ENCODE measurements at regions of chr2 and their contacts with region 1.

Region 1: DNA sequence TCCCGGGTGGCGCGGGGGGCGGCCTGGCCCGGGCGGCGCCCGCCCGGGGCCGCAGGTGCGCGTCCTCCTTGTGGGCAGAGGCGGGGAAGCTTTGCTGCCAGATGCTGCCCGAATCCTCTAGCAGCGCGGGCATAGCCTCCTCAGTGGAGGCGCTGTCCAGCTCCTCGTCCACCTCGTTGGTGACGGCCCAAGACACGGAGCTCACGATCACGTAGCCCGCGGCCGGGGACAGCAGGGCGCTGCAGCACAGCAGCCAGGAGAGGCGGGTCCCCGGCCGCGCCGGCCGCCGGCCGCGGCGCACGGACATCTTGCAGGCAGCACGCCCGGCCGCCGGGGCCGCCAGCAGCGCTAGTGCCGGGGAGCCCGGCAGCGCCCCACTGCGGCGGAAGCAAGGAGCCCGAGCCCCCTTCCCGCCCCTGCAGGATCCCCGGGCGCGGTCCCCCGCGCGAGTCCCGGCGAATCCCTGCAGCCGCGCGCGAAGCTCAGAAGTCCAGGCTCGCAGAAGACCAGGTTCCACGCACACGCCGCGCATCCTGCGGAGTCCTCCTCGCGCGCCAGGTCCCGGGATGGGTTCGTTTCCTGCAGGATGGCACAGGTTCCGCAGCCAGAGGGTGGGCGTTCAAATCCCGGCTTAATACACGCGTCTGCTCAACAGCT is at the start of gene CREG2:
- DNase-seq: peak; percentile 34 to 89
- H3K4me3 ChIP-seq: peak within 1 kb of the TSS; percentile 62 to 79 (median 74)
- H3K27ac ChIP-seq: no peak within 1 kb of the TSS
- H3K4me1 ChIP-seq: peaks cover 0 to 6% (median 3%) of the 10 kb centered on the region in 4 experiments; a peak in 2 of 7 replicates
- H3K27me3 ChIP-seq: peaks cover 16 to 35% (median 27%) of the 10 kb centered on the region in 4 experiments
- CTCF ChIP-seq: peak; percentile 68 to 98 (median 70)
- EP300 ChIP-seq: 0 out of 3 replicates have a peak, but pooled peaks of 1 of the 2 experiments have one; percentile 30
- POLR2A ChIP-seq: no peak
- RAD21 ChIP-seq: peak; percentile 40 to 72
- total RNA-seq, gene CREG2: 2.0 and 2.2 TPM in 2 replicates

Region 2: DNA sequence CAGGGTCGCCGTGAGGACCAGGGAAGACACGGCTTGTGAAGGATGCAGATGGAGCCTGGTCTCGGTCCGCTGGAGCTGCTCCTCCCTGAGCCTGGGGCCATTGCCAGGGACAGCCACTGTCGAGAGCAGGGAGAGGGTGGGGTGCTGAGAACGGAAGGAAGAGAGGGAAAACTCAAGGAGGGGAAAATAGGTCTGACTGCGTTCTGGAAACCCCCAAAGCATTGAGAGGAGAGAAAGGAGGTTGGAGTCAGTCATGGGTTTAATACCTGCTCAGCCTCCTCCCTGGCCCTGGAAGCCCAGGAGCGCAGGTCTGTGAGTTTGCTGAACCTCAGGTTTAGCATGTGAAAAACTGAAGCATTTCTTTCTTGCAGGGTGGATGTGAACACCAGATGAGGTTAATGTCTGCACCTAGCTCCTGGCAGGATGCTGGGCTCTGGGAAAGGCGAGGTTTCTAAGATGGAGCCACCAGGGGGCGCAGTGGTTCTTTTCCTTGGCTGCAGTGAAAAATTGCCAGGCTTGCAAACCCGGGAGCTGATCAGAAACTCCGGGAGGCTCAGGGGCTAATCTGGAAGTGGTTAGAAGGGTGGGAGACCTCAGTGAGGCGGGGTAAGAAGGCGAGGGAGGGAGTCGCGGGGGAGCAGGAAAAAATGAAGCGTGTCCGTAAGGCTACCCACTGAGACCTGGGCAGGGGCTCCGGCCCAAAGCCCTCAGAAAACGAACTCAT is 45.2 kb before region 1 on chr2:
- CTCF ChIA-PET with region 1: interaction called, 48 read pairs
- POLR2A ChIA-PET with region 1: interaction called, 4 read pairs
- DNase-seq: peak; percentile 68 to 97
- H3K4me3 ChIP-seq: no peak overlapping the region
- H3K27ac ChIP-seq: no peak overlapping the region
- H3K4me1 ChIP-seq: peaks cover 7 to 19% (median 12%) of the 10 kb centered on the region in 4 experiments
- H3K27me3 ChIP-seq: no peaks in the 10 kb centered on the region
- CTCF ChIP-seq: peak; percentile 74 to 88 (median 85)
- EP300 ChIP-seq: no peak
- POLR2A ChIP-seq: no peak
- RAD21 ChIP-seq: peak; percentile 86 to 89

Region 3: DNA sequence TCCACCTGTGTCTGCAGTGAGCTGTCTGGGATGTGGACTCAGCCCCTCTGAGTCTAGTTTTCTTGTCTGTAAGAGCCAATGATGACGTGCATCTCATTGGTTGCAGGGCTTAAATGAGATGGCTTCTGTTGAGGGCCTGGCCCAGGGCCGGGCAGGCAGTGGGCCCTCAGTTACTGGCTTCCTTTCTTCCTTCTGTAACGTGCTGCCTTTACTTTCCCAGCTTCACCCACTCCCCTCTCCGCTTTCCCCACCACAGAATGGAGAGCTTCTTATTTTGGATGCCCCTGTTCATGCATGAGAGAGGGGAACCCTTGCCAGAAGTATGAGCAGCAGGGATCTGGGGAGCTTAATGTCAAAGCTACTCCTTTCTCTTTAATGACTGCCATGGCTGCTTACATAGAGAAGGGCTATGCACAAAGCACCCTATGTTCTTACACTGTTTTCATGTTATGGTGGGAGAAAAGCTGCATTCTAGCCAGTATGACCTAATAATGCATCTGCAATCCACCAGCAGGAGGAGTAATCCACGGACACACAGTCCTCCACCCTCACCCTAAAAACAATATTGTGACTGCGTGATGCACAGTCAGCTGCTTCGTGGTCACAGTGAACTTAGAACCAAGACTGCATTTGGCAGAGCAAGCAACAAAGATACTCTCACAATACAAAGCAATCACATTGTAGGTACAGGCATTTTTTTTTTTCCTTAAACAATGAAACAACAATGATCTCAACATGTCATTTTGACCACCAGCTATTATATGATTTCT is 37.2 kb before region 1 on chr2:
- CTCF ChIA-PET with region 1: interaction called, 25 read pairs
- POLR2A ChIA-PET with region 1: no interaction called
- DNase-seq: no peak
- H3K4me3 ChIP-seq: no peak overlapping the region
- H3K27ac ChIP-seq: no peak overlapping the region
- H3K4me1 ChIP-seq: peaks cover 0 to 5% (median under 1%) of the 10 kb centered on the region in 4 experiments; a peak in 3 of 7 replicates
- H3K27me3 ChIP-seq: no peaks in the 10 kb centered on the region
- CTCF ChIP-seq: peak in 2 of 3 experiments; percentile 9 to 40; a peak in 2 of 4 replicates
- EP300 ChIP-seq: no peak
- POLR2A ChIP-seq: no peak
- RAD21 ChIP-seq: no peak; a peak in 1 of 4 replicates

Region 4: GRCh38 chr2:101361121-101361870 is 26.0 kb before region 1 on chr2:
- CTCF ChIA-PET with region 1: interaction called, 11 read pairs
- POLR2A ChIA-PET with region 1: interaction called, 5 read pairs
- DNase-seq: no peak
- H3K4me3 ChIP-seq: no peak overlapping the region
- H3K27ac ChIP-seq: no peak overlapping the region
- H3K4me1 ChIP-seq: peaks cover 2 to 7% (median 2%) of the 10 kb centered on the region in 4 experiments; a peak in 5 of 7 replicates
- H3K27me3 ChIP-seq: no peaks in the 10 kb centered on the region
- CTCF ChIP-seq: no peak
- EP300 ChIP-seq: no peak
- POLR2A ChIP-seq: no peak
- RAD21 ChIP-seq: no peak

Region 5: GRCh38 chr2:101401906-101402305 is 14.6 kb after region 1 on chr2:
- CTCF ChIA-PET with region 1: interaction called, 32 read pairs
- POLR2A ChIA-PET with region 1: no interaction called
- DNase-seq: no peak
- H3K4me3 ChIP-seq: no peak overlapping the region
- H3K27ac ChIP-seq: no peak overlapping the region
- H3K4me1 ChIP-seq: peaks cover 1 to 7% (median 3%) of the 10 kb centered on the region in 4 experiments; a peak in 4 of 7 replicates
- H3K27me3 ChIP-seq: no peaks in the 10 kb centered on the region
- CTCF ChIP-seq: peak in 1 of 3 experiments; percentile 22; a peak in 1 of 4 replicates
- EP300 ChIP-seq: no peak
- POLR2A ChIP-seq: no peak
- RAD21 ChIP-seq: peak; percentile 23 to 30; a peak in 2 of 4 replicates

Region 6: GRCh38 chr2:101410716-101411211 is 23.5 kb after region 1 on chr2:
- CTCF ChIA-PET with region 1: interaction called, 32 read pairs
- POLR2A ChIA-PET with region 1: no interaction called
- DNase-seq: no peak
- H3K4me3 ChIP-seq: no peak overlapping the region
- H3K27ac ChIP-seq: no peak overlapping the region
- H3K4me1 ChIP-seq: peaks cover 0 to 3% (median under 1%) of the 10 kb centered on the region in 4 experiments; a peak in 3 of 7 replicates
- H3K27me3 ChIP-seq: no peaks in the 10 kb centered on the region
- CTCF ChIP-seq: no peak
- EP300 ChIP-seq: no peak
- POLR2A ChIP-seq: no peak
- RAD21 ChIP-seq: no peak

Measured in H1 (cell line).